ENCODE measurements at regions of chr18 and their contacts with region 1.

Region 1: GRCh38 chr18:12679183-12679786 is 21.4 kb upstream of the SPIRE1 start:
- DNase-seq: peak; percentile 71 to 84 (median 79)
- ATAC-seq: peak; percentile 82 to 98 (median 98)
- H3K4me3 ChIP-seq: peak overlapping the region in 8 of 12 donors; percentile 5 to 44 (median 34)
- H3K27ac ChIP-seq: peak overlapping the region; percentile 34 to 90 (median 80)
- H3K4me1 ChIP-seq: peaks cover 0 to 14% (median 8%) of the 10 kb centered on the region in 12 donors
- H3K27me3 ChIP-seq: no peaks in the 10 kb centered on the region
- CTCF ChIP-seq: no peak
- POLR2A ChIP-seq: peak in 1 of 2 donors; percentile 77

Region 2: DNA sequence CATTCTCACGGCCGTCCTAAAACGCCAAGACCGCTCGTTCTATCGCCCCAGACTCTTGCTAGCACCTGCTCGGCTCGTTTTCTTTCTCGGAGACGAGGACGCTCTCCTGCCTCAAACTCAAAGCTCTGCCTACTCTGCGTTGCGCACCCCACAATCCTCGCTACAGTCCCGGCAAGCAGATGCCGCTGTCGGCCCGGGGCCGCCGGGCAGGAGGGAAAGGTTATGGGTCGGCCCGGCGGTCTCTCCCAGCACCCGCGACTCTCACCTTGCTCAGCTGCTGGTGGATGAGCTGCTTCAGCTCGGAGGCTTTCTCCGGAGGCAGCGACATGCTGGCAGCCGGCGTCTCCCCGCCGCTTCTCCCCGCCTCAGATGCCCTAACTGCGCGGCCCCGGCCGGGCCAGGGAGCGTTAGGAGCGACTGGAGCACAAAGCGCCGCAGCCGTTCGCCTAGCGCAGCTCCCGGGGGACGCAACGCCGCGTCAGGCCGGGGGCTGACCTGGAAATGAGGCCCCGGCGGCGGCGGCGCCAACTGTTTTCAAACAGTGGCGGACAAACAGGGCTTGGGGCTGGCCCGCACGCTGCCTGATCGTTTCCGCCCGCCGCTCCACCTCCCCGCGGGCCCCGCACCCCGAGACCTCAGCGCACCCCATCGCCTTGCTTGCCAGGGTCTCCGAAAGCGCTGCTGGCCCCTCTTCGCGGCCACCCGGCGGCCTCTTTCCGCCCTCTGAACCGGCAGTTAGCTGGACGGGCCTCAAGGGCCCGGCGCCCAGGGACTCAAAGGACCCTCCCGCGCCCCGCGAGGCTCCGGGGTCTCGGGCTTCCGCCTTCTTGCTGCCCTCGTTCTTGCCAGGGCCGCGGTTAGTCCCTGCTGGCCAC is 23.2 kb after region 1 on chr18 and contains the starts of genes CEP76 and PSMG2:
- intact Hi-C with region 1: loop called in 1 of 10 experiments (anchors 1 kb)
- DNase-seq: peak; percentile 91 to 97 (median 95)
- ATAC-seq: peak; percentile 79 to 97 (median 96)
- H3K4me3 ChIP-seq: peak within 1 kb of the TSS; percentile 67 to 100 (median 88)
- H3K27ac ChIP-seq: peak within 1 kb of the TSS; percentile 92 to 100 (median 98)
- H3K4me1 ChIP-seq: peaks cover 0 to 37% (median 28%) of the 10 kb centered on the region in 12 donors
- H3K27me3 ChIP-seq: no peaks in the 10 kb centered on the region
- CTCF ChIP-seq: peak in 2 of 12 donors; percentile 7 to 8
- POLR2A ChIP-seq: peak in 1 of 2 donors; percentile 84
- total RNA-seq, gene CEP76: 1.6 to 7.9 (median 4.4) TPM
- total RNA-seq, gene PSMG2: 35.8 to 61.5 (median 44.7) TPM

Region 3: GRCh38 chr18:12726774-12727550 is 47.7 kb after region 1 on chr18:
- intact Hi-C with region 1: no loop called
- DNase-seq: peak in 2 of 5 donors; percentile 44 to 49
- ATAC-seq: peak; percentile 37 to 68 (median 66)
- H3K4me3 ChIP-seq: no peak overlapping the region
- H3K27ac ChIP-seq: no peak overlapping the region
- H3K4me1 ChIP-seq: no peaks in the 10 kb centered on the region
- H3K27me3 ChIP-seq: no peaks in the 10 kb centered on the region
- CTCF ChIP-seq: peak; percentile 71 to 93 (median 87)
- POLR2A ChIP-seq: no peak

Measured in heart left ventricle (tissue), 16 donors.